ENCODE measurements at regions of chr16 and their contacts with region 1.

Region 1: GRCh38 chr16:29973384-29974246 is at the start of gene TAOK2:
- DNase-seq: peak; percentile 95 to 100
- H3K4me3 ChIP-seq: peak within 1 kb of the TSS; percentile 84
- H3K27ac ChIP-seq: peak within 1 kb of the TSS; percentile 8; the same call in 1 of the 2 replicates
- H3K4me1 ChIP-seq: peaks cover 19% of the 10 kb centered on the region
- H3K27me3 ChIP-seq: no peaks in the 10 kb centered on the region
- CTCF ChIP-seq: no peak
- total RNA-seq, gene TAOK2: 76.6 and 82.9 TPM in 2 replicates

Region 2: DNA sequence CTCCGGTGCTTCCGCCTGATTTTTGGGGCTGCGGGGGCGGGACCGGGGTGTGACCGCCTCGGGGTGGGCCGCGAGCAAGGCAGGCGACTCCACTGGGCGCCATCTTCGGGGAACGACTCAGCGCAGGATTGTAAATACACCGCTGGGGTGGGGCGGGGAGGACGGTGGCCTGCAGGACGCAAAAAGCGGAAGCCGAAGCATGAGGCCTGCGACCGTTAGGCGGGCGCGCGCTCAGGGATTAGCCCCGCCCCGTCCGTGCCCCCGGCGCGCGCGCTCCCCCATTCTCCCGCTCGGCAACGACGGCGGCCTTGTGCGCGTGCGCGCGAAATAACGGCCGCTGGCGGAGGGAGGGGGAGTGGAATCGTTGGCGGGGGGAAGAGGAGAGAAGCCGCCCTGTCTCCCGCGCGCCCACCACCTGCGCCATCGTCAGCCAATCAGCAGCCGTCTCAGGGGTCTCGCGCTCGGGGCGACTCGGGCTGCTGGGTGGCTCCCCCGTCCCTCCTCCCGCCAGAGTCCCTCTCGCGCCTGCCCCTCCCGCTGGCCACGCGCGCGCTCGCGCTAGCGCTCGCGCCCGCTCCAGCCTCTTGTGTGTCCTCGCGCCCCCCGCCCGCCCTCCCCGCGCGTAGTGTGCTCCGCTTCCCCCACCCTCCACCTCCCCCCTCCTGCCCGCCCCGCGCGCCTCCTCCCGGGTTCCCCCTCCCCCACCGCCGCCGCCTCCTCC is 168.1 kb before region 1 on chr16:
- CTCF ChIA-PET with region 1: no interaction called
- POLR2A ChIA-PET with region 1: no interaction called
- intact Hi-C with region 1: loop called (anchors 1 kb)
- DNase-seq: peak; percentile 94 to 99
- H3K4me3 ChIP-seq: peak overlapping the region; percentile 76
- H3K27ac ChIP-seq: peak overlapping the region; percentile 68
- H3K4me1 ChIP-seq: peaks cover 29% of the 10 kb centered on the region
- H3K27me3 ChIP-seq: no peaks in the 10 kb centered on the region
- CTCF ChIP-seq: no peak

Region 3: DNA sequence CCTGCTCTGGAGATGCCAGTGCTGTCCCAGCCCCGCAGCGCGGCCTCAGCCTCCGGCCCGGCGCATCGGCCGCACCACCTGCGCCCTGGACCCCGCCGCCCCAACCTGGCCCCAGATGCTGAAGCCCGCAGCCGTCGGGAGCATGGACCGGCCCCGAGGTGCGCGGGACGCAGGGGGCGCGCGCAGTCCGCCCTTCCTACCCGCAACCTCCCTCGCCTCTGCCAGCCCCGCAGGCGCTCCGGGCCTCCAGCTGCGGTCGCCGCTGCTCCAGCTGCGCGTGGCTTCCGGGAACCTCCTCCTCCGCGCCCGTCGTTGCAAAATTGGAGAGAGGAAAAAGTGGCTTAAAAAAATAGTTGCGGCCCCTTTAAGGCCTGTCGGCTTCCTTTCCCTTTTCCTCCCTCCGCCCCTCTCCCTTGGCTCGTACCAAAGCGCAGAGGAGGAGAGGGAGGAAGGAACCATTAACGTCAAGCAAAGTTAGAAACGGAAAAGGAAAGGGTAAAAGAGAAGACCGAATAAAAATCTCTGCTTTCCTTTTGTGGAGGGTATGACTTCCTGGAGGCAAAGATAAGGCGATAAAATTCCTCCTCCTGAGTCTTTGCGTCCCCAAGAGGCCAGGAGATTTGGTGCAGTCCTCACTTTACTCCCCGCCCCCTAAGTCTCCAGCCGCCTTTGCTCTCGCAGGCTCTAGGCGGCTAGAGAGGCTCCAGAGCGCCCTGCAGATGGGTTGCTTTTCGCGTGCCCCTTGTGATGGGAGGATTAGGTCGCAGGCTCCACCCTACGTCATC is 110.5 kb before region 1 on chr16 and contains the start of gene CDIPT:
- CTCF ChIA-PET with region 1: no interaction called
- POLR2A ChIA-PET with region 1: interaction called, 4 read pairs
- intact Hi-C with region 1: loop called (anchors 1 kb)
- DNase-seq: peak; percentile 93 to 97
- H3K4me3 ChIP-seq: peak within 1 kb of the TSS; percentile 78
- H3K27ac ChIP-seq: peak within 1 kb of the TSS; percentile 81
- H3K4me1 ChIP-seq: peaks cover 10% of the 10 kb centered on the region
- H3K27me3 ChIP-seq: no peaks in the 10 kb centered on the region
- CTCF ChIP-seq: 0 out of 2 replicates have a peak, but pooled peaks have one; percentile 35
- total RNA-seq, gene CDIPT: 90.6 and 133 TPM in 2 replicates

Region 4: DNA sequence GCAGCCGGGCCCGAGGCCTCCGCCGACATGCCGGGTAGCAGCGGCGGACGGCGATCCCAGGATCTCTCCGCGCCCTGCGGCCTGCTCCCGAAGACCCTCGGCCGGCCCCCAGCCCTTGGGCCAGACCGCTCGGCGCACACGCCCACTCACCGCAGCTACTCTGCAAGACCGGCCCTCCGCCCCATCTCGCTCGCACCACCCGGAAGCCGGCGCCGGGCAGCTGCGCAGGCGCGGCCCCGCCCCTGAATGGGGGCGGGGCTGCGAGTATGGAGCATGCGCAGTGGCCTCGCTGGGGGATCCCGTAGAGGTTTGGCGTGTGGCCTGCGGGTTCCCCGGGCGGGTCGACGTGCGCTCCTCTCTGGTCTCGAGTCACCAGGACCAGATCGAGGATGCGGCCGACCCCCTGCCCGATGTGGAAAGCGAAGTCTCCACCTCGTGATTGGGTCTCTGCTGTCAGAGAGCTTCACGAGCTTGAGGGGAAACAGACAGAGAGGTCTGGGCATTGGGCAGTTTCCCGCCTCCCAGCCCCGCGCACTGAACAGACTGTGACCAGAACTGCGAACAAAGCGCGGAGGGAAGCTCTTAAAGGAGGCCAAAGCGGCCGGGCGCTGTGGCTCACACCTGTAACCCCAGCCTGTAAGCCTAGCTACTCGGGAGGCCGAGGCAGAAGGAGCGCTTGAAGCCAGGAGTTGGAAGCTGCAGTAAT is 47.5 kb before region 1 on chr16 and contains the start of gene KCTD13:
- CTCF ChIA-PET with region 1: interaction called, 5 read pairs
- POLR2A ChIA-PET with region 1: interaction called, 22 read pairs
- intact Hi-C with region 1: loop called (anchors 1 kb)
- DNase-seq: peak; percentile 70 to 97
- H3K4me3 ChIP-seq: peak within 1 kb of the TSS; percentile 84
- H3K27ac ChIP-seq: peak within 1 kb of the TSS; percentile 46
- H3K4me1 ChIP-seq: peaks cover 23% of the 10 kb centered on the region
- H3K27me3 ChIP-seq: no peaks in the 10 kb centered on the region
- CTCF ChIP-seq: no peak
- total RNA-seq, gene KCTD13: 52.7 and 72.0 TPM in 2 replicates

Region 5: DNA sequence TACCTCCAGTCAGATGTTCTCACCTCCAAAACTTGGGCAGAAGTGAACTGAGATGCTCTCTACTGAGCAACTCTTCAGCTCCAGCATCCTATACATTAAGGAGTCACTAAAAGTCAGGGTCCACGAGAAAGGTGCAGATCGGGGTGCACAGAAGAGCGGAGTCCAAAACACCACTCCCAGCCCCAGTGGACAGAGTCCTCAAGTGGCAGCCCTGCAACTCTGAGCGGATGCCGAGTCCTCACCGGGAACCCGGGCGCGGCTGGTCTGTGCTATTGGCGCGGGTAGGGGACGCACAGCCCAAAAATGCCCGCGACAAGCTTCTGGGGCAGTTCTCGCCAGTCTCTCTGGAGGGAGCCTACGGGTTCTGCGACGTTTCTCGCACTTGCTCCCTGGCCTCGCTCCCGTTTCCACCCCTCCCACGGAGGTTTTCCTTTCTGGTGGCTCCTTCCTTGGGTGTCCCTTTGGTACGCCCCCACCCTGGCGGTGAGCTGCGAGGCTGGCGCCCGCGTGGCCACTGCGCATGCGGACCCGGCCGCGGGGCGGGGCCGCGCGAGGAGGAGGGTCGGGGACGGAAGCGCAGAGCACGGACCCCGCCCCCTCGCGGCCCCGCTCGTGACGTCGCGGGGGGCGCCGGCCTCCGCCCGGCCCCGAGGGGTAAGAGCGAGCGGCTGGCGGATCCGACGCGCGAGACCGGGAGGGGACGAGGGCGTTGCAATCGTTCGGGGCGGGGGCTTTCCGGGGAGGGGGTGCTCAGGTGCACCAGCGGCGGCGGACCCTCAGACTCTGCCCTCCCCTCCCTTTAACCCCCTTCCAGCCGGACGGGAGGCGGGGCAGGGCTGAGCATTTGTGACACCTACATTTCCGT is 11.9 kb before region 1 on chr16 and contains the start of gene TMEM219:
- CTCF ChIA-PET with region 1: interaction called, 5 read pairs
- POLR2A ChIA-PET with region 1: interaction called, 22 read pairs
- intact Hi-C with region 1: no loop called
- DNase-seq: peak; percentile 76 to 98
- H3K4me3 ChIP-seq: peak within 1 kb of the TSS; percentile 78
- H3K27ac ChIP-seq: no peak within 1 kb of the TSS; the same call in 1 of the 2 replicates
- H3K4me1 ChIP-seq: peaks cover 11% of the 10 kb centered on the region
- H3K27me3 ChIP-seq: no peaks in the 10 kb centered on the region
- CTCF ChIP-seq: no peak; the same call in 1 of the 2 replicates
- total RNA-seq, gene TMEM219: 141 and 203 TPM in 2 replicates

Measured in PC-9 (cell line).